Activated naive CD4-positive, alpha-beta T cell treated with anti-CD3 and anti-CD28 coated beads, Interleukin-2, amount 10 ng/mL, durations not matched to agents 7 days and 5 days (primary cell): ENCODE measurements at regions of chr19 and their contacts with region 1.

Region 1: GRCh38 chr19:41753936-41754529 is 1.3 kb upstream of the CEACAM6 start:
- DNase-seq: peak; percentile 79
- H3K4me3 Mint-ChIP-seq: no peak overlapping the region
- H3K27ac Mint-ChIP-seq: no peak overlapping the region
- H3K4me1 Mint-ChIP-seq: peaks cover 2% of the 10 kb centered on the region
- H3K27me3 Mint-ChIP-seq: peaks cover 77% of the 10 kb centered on the region

Region 2: DNA sequence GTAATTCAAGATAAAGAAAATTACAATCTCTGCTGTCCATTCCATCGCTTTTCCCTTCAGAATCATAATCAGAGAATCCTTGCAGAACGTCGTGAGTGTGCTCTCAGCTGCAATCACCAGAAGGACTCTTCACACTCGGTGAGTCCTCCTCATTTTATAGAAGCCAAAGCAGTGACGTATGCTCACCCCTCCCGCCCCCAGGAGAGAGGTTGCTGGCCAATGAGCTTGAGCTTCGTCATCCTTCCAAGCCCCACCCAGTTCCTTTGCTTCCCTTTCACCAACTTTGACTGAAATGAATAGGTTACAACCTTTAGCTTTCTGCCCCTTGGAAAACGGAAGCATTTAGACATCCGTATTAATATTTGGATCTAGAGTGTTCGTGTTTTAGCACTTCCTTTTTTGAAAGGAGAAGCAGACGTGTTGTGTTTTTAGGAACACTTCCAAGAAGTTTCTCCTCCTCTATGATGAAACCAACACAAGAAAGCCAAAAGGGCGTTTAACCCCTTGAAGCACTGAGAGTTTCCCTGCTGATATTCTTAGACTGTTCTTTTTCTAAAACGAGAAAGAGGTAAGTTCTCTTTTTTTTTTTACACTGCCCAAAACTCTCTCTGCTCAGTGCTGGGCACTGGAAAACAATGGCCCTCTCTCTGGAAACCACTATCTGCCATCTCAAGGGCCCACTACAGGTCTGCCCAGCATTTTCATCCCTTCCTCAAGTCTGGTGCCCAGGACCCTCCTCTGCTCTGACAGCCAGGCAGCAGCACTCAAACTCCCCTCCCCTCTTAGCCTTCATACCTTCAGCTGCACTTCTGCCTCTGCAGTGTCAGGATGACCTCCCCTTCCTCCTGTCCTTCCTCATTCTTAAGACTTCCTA is 222.4 kb before region 1 on chr19:
- CTCF ChIA-PET with region 1: no interaction called
- DNase-seq: peak; percentile 91
- H3K4me3 Mint-ChIP-seq: peak overlapping the region; percentile 60
- H3K27ac Mint-ChIP-seq: peak overlapping the region; percentile 78
- H3K4me1 Mint-ChIP-seq: peaks cover 81% of the 10 kb centered on the region
- H3K27me3 Mint-ChIP-seq: peaks cover 36% of the 10 kb centered on the region

Region 3: DNA sequence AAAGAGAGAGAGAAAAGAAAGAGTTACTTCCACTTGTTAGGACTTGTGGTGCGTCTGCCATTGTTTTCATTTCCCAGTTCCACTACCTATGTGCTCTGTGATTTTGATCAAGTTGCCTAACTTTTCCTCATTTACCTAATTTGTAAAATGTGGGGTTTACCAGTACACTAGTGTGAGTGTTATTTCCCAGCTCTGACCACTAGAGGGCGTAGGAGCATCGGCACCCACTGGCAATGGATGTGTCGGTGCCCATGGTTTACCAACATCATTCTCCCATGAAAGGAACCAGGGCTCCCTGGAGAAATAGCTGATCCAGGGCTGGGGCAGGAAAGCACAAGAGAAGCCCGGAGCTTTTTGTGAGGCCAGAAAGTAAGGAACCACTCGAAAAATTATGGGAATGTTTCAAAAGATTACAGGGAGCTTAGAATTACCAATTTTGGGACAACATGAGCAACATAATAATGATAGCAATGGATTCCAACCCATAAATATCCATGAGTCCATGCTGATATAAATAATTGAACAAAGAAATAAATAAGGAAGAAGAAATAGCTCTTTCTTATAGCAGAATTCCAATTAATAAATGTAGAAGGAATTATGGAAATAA is 112.1 kb before region 1 on chr19:
- CTCF ChIA-PET with region 1: no interaction called
- DNase-seq: peak; percentile 79
- H3K4me3 Mint-ChIP-seq: no peak overlapping the region
- H3K27ac Mint-ChIP-seq: no peak overlapping the region
- H3K4me1 Mint-ChIP-seq: peaks cover 4% of the 10 kb centered on the region
- H3K27me3 Mint-ChIP-seq: peaks cover 22% of the 10 kb centered on the region

Region 4: DNA sequence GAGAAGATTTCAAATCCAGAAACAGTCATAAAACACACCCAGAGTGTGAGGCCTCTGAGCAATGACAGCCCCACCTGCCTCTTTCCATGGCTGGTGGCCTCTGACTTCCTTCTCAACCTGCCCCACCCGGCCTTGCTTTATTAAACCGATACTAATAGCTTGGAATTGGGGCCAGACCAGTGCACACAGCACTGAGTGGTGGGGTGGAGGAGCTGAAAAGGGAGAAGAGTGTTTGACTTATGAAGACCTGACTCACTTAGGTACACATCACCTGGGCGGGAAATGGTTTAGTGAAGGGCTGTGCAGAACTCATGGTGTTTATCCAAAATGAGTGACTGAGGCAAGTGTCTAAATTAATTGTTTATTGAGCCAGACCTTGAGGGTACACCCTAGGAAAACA is 19.4 kb before region 1 on chr19:
- CTCF ChIA-PET with region 1: interaction called, 14 read pairs
- DNase-seq: no peak
- H3K4me3 Mint-ChIP-seq: no peak overlapping the region
- H3K27ac Mint-ChIP-seq: no peak overlapping the region
- H3K4me1 Mint-ChIP-seq: no peaks in the 10 kb centered on the region
- H3K27me3 Mint-ChIP-seq: peaks cover 52% of the 10 kb centered on the region

Region 5: DNA sequence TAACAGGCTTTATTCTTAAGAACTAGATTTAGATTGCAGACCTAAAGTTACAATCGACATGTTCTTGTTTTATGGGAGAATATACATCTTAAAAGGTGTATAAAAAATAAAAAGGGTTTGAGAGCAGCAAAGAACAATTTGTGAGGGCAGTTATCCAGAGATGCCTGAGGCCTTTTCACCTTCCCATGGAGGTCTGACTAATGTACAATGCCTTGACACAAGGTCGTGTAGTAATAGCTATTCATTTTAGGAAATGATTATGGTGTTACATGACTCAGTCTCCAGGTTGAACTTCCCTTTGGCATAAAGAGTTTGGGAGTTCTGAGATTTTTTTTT is 21.3 kb after region 1 on chr19:
- CTCF ChIA-PET with region 1: interaction called, 19 read pairs
- DNase-seq: no peak
- H3K4me3 Mint-ChIP-seq: no peak overlapping the region
- H3K27ac Mint-ChIP-seq: no peak overlapping the region
- H3K4me1 Mint-ChIP-seq: peaks cover 38% of the 10 kb centered on the region
- H3K27me3 Mint-ChIP-seq: peaks cover 100% of the 10 kb centered on the region

Region 6: GRCh38 chr19:41795031-41795461 is 41.0 kb after region 1 on chr19:
- CTCF ChIA-PET with region 1: interaction called, 52 read pairs
- DNase-seq: peak; percentile 75
- H3K4me3 Mint-ChIP-seq: no peak overlapping the region
- H3K27ac Mint-ChIP-seq: no peak overlapping the region
- H3K4me1 Mint-ChIP-seq: no peaks in the 10 kb centered on the region
- H3K27me3 Mint-ChIP-seq: peaks cover 58% of the 10 kb centered on the region

Region 7: GRCh38 chr19:42023121-42023942 is 269.3 kb after region 1 on chr19:
- CTCF ChIA-PET with region 1: no interaction called
- DNase-seq: peak; percentile 38
- H3K4me3 Mint-ChIP-seq: no peak overlapping the region
- H3K27ac Mint-ChIP-seq: no peak overlapping the region
- H3K4me1 Mint-ChIP-seq: no peaks in the 10 kb centered on the region
- H3K27me3 Mint-ChIP-seq: peaks cover 28% of the 10 kb centered on the region